ENCODE measurements at regions of chr14 and their contacts with region 1.

Region 1: DNA sequence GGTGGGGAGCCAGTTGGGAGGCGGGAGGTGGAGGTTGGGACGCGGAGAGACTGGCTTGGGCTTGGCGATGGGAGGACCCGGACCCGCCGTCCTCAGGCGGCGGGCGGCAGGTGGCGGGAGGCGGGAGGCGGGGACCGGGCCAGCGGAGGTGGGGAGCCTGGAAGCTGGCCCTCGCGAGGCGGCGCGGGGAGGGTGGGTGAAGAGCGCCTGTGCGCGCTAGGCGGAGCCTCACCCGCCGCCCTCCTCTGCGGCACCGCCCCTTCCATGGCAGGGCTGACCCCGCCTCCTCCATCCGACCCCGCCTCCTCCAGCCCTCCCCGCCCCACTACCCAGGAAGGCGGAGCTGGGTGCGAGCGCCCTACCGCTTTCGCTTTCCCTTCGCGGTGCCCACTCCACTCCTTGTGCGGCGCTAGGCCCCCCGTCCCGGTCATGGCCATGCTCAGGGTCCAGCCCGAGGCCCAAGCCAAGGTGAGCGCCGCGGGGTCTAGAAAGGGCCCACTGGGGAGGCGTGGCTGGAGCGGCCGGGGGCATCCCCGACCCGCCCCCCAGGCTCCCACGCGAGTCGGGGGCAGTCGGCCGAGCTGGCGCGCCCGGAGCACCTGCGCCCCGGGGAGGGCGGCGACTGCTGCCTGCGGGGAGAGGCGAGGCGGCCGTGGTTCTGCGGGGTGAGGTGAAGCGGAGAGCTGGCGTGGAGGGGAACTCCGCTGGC is at the start of gene PSME1:
- DNase-seq: peak; percentile 98
- H3K4me3 Mint-ChIP-seq: peak within 1 kb of the TSS; percentile 94
- H3K27ac Mint-ChIP-seq: peak within 1 kb of the TSS; percentile 93
- H3K4me1 Mint-ChIP-seq: peaks cover 49% of the 10 kb centered on the region
- H3K27me3 Mint-ChIP-seq: no peaks in the 10 kb centered on the region
- total RNA-seq, gene PSME1: 300 and 306 TPM in 2 replicates

Region 2: DNA sequence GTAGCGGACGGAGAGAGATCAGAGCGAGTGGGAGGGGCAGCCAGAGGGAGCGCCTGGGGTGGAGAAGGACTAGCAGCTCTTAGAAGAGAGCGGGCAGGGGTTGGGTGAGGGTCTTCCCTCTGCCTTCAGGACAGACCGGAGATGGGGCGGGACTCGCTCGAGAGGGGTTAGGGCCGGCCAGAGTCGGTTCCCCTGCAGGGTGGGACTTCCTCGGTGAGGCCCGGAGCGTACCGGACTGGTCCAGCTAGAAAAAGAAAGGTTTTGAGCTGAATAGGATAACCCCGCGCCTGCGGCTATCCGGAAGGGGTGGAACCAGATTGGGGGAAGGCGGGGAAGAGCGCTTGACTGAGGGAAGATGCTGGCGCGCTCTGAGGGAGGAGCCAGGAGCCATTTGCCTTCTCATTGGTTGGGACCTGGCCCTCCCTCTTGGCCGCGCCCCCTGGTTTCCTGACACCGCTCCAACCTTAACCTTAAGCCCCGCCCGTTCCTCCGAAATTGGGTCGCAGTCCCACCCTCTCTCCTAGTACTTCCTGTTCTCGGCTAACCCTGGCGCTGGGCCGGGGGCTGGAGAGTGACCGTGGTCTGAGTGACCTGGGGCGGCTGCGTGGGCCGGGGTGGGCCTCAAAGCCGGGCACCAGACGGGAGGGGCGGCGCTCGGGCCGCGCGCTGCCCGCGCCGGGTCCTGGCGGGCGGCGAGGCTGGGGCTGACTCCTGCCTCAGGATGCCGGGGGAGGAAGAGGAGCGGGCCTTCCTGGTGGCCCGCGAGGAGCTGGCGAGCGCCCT is 11.2 kb after region 1 on chr14 and contains the start of gene RNF31:
- intact Hi-C with region 1: loop called (anchors 1 kb)
- DNase-seq: peak; percentile 99
- H3K4me3 Mint-ChIP-seq: peak within 1 kb of the TSS; percentile 97
- H3K27ac Mint-ChIP-seq: peak within 1 kb of the TSS; percentile 99
- H3K4me1 Mint-ChIP-seq: peaks cover 59% of the 10 kb centered on the region
- H3K27me3 Mint-ChIP-seq: no peaks in the 10 kb centered on the region
- total RNA-seq, gene RNF31: 95.1 and 95.6 TPM in 2 replicates

Region 3: GRCh38 chr14:24659916-24660570 is 524.1 kb after region 1 on chr14:
- intact Hi-C with region 1: no loop called
- DNase-seq: peak; percentile 52
- H3K4me3 Mint-ChIP-seq: peak overlapping the region; percentile 39
- H3K27ac Mint-ChIP-seq: peak overlapping the region; percentile 80
- H3K4me1 Mint-ChIP-seq: peaks cover 59% of the 10 kb centered on the region
- H3K27me3 Mint-ChIP-seq: no peaks in the 10 kb centered on the region